ENCODE measurements at regions of chr1 and their contacts with region 1.

Region 1: GRCh38 chr1:41573785-41574713 is 89.6 kb upstream of the EDN2 start:
- DNase-seq: peak in 3 of 4 donors; percentile 71 to 87 (median 77)
- ATAC-seq: peak; percentile 98
- H3K4me3 ChIP-seq: no peak overlapping the region
- H3K27ac ChIP-seq: no peak overlapping the region
- H3K4me1 ChIP-seq: peaks cover 0 to 12% of the 10 kb centered on the region in 2 donors
- H3K27me3 ChIP-seq: no peaks in the 10 kb centered on the region
- CTCF ChIP-seq: peak; percentile 88

Region 2: GRCh38 chr1:41802532-41803501 is 228.8 kb after region 1 on chr1:
- intact Hi-C with region 1: loop called in 1 of 2 experiments (anchors 10 kb)
- DNase-seq: peak in 2 of 4 donors; percentile 75 to 83
- ATAC-seq: peak; percentile 80
- H3K4me3 ChIP-seq: no peak overlapping the region
- H3K27ac ChIP-seq: peak overlapping the region in 1 of 2 donors; percentile 75
- H3K4me1 ChIP-seq: peaks cover 8 to 40% of the 10 kb centered on the region in 2 donors
- H3K27me3 ChIP-seq: no peaks in the 10 kb centered on the region
- CTCF ChIP-seq: no peak